ENCODE measurements at regions of chr5 and their contacts with region 1.

Region 1: GRCh38 chr5:142611154-142611553 is 74.7 kb downstream of the FGF1 start:
- DNase-seq: peak; percentile 63 to 81
- ATAC-seq: peak; percentile 75 to 88 (median 86)
- H3K4me3 ChIP-seq: no peak overlapping the region
- H3K27ac ChIP-seq: peak overlapping the region in 1 of 10 donors; percentile 5
- H3K4me1 ChIP-seq: peaks cover 0 to 37% (median 3%) of the 10 kb centered on the region in 9 donors
- H3K27me3 ChIP-seq: peaks cover 0 to 3% (median 0%) of the 10 kb centered on the region in 7 donors
- CTCF ChIP-seq: peak; percentile 91 to 97 (median 93)

Region 2: GRCh38 chr5:142133330-142134206 is 477.6 kb before region 1 on chr5:
- intact Hi-C with region 1: no loop called
- DNase-seq: no peak
- ATAC-seq: no peak
- H3K4me3 ChIP-seq: no peak overlapping the region
- H3K27ac ChIP-seq: peak overlapping the region in 1 of 10 donors; percentile 34
- H3K4me1 ChIP-seq: peaks cover 0 to 31% (median 11%) of the 10 kb centered on the region in 9 donors
- H3K27me3 ChIP-seq: no peaks in the 10 kb centered on the region
- CTCF ChIP-seq: no peak

Region 3: DNA sequence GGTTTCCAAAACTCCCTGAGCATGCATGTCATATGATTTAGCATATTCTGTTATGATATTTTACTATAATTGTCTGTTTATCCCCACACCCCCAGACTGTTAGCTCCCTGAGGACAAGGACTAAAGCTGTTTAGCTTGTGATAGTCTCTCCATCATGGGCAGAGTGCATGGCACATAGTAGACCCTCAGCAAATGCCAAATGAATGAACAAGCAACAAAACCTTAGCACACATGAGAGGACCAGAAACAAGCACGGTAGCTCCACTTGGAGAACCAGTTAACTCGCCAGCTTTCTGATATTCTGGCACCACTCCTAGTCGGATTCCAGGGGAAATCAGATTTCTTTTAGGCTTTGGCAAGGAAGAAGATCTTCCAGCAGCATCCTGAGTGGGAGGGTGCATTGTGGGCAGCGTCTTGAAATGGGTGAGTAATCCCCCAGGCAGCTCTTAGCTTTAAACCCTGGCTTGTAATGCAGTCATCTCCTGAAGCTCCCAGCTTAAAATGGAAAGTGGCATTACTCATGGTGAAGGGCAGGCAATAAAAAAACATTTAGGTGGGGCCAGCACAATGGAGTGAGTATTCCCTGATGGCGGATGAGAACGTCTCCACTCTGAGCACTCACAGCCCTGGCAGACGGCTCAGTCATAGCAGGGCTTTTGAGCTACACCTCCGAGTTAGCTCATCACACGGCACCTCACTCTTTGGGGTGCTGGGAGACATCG is 33.6 kb after region 1 on chr5:
- intact Hi-C with region 1: loop called in 1 of 10 experiments (anchors 5 kb)
- DNase-seq: peak in 1 of 2 donors; percentile 27
- ATAC-seq: peak; percentile 61 to 94 (median 74)
- H3K4me3 ChIP-seq: no peak overlapping the region
- H3K27ac ChIP-seq: peak overlapping the region in 7 of 10 donors; percentile 5 to 69 (median 49)
- H3K4me1 ChIP-seq: peaks cover 11 to 55% (median 19%) of the 10 kb centered on the region in 9 donors
- H3K27me3 ChIP-seq: no peaks in the 10 kb centered on the region
- CTCF ChIP-seq: no peak

Region 4: GRCh38 chr5:142655339-142656267 is 44.4 kb after region 1 on chr5:
- intact Hi-C with region 1: loop called in 9 of 10 experiments (anchors 1 to 5 kb)
- DNase-seq: peak; percentile 86 to 89
- ATAC-seq: peak; percentile 85 to 96 (median 92)
- H3K4me3 ChIP-seq: no peak overlapping the region
- H3K27ac ChIP-seq: peak overlapping the region in 9 of 10 donors; percentile 3 to 81 (median 66)
- H3K4me1 ChIP-seq: peaks cover 5 to 53% (median 27%) of the 10 kb centered on the region in 9 donors
- H3K27me3 ChIP-seq: peaks cover 0 to 7% (median 0%) of the 10 kb centered on the region in 7 donors
- CTCF ChIP-seq: peak; percentile 98 to 100 (median 99)

Region 5: DNA sequence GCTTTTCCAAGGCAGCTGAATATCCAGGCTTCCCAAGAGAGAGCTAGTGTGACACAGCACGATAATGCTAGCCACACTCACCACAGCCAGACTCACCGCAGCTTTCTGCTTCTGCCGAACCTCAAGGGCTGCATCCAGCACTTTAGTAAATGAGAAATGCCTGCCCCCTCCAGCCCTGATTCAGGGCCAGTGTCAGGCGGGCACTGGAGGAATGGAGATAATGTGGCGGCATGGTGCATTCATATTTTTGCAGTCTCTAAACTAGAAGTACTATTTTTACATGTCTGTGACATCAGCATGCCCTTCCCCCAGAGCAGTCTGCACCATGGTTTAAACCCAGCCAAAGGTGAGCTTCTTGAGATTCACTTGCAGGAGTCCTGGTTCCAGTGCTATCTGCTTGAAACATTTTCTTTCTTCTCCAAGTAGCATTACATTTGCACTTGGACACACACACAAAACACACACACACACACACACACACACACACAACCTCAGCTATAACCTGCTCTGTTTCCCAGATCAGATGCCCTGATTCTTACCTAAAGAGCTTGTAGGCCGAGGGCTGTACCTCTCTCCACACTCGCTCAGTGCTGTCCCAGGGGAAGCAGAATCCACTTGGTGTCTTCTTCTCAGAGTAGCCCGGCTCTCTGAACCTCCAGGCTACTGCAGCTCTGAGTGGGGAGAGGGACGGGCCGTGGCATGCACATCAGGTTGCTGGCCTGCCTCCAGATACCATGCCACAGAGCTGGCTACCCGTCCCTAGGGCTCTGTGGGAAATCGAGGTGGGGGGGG is 74.5 kb after region 1 on chr5 and contains the start of gene FGF1:
- intact Hi-C with region 1: no loop called
- DNase-seq: peak; percentile 63 to 70
- ATAC-seq: peak; percentile 65 to 88 (median 82)
- H3K4me3 ChIP-seq: peak within 1 kb of the TSS in 7 of 10 donors; percentile 4 to 26 (median 12)
- H3K27ac ChIP-seq: peak within 1 kb of the TSS; percentile 18 to 87 (median 79)
- H3K4me1 ChIP-seq: peaks cover 20 to 74% (median 58%) of the 10 kb centered on the region in 9 donors
- H3K27me3 ChIP-seq: no peaks in the 10 kb centered on the region
- CTCF ChIP-seq: no peak
- total RNA-seq, gene FGF1: 31.4 to 110 (median 58.4) TPM

Region 6: GRCh38 chr5:143054480-143054941 is 443.4 kb after region 1 on chr5:
- intact Hi-C with region 1: no loop called
- DNase-seq: no peak
- ATAC-seq: no peak
- H3K4me3 ChIP-seq: no peak overlapping the region
- H3K27ac ChIP-seq: peak overlapping the region in 3 of 10 donors; percentile 12 to 20 (median 20)
- H3K4me1 ChIP-seq: peaks cover 2 to 80% (median 55%) of the 10 kb centered on the region in 9 donors
- H3K27me3 ChIP-seq: no peaks in the 10 kb centered on the region
- CTCF ChIP-seq: no peak

Region 7: GRCh38 chr5:143066556-143067281 is 455.6 kb after region 1 on chr5:
- intact Hi-C with region 1: no loop called
- DNase-seq: peak in 1 of 2 donors; percentile 43
- ATAC-seq: peak in 4 of 8 donors; percentile 3 to 21 (median 6)
- H3K4me3 ChIP-seq: no peak overlapping the region
- H3K27ac ChIP-seq: peak overlapping the region in 7 of 10 donors; percentile 19 to 85 (median 36)
- H3K4me1 ChIP-seq: peaks cover 9 to 60% (median 54%) of the 10 kb centered on the region in 9 donors
- H3K27me3 ChIP-seq: no peaks in the 10 kb centered on the region
- CTCF ChIP-seq: no peak